Dorsolateral prefrontal cortex (tissue), 120 donors: ENCODE measurements at regions of chr19 and their contacts with region 1.

Region 1: DNA sequence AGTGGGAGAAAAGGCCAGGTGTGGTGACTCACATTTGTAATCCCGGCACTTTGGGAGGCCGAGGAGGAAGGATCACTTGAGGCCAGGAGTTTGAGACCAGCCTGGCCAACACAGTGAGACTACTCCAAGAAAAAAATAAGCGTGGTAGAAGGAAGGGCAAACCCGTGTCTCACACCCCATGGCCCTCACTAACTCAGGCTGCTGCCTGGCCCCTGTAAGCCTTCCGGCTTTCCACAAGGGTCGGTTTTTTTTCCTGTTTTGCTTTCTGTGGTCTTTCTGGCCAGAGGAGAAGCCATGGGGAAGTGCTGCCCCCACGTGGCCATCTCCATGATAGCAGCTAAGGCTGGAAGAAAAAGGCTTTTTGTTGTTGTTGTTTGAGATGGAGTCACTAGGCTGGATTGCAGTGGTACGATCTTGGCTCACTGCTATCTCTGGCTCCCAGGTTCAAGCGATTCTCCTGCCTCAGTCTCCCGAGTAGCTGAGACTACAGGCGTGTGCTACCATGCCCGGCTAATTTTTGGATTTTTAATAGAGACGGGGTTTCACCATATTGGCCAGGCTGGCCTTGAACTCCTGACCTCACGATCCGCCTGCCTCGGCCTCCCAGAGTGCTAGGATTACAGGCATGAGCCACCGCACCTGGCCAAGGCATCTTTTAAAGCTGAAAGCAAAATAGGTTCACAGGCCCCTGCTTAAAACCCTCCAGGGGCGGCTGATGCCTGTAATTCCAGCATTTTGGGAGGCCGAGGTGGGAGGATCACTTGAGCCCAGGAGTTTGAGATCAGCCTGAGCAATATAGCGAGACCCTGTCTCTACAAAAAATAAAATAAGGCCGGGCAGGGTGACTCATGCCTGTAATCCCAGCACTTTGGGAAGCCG is 7.5 kb upstream of the ARHGEF18 start:
- DNase-seq: peak; percentile 62 to 93 (median 84)
- H3K4me3 ChIP-seq: peak overlapping the region in 15 of 59 donors; percentile 1 to 34 (median 24)
- H3K27ac ChIP-seq: peak overlapping the region in 19 of 59 donors; percentile 9 to 64 (median 53)
- H3K27me3 ChIP-seq: no peaks in the 10 kb centered on the region
- CTCF ChIP-seq: peak; percentile 85 to 99 (median 95)

Region 2: GRCh38 chr19:7098701-7099596 is 242.2 kb before region 1 on chr19:
- intact Hi-C with region 1: loop called (anchors 2 kb)
- DNase-seq: peak; percentile 78 to 90 (median 86)
- H3K4me3 ChIP-seq: peak overlapping the region; percentile 51 to 93 (median 72)
- H3K27ac ChIP-seq: peak overlapping the region; percentile 82 to 99 (median 96)
- H3K27me3 ChIP-seq: no peaks in the 10 kb centered on the region
- CTCF ChIP-seq: peak in 15 of 56 donors; percentile 4 to 50 (median 20)

Region 3: DNA sequence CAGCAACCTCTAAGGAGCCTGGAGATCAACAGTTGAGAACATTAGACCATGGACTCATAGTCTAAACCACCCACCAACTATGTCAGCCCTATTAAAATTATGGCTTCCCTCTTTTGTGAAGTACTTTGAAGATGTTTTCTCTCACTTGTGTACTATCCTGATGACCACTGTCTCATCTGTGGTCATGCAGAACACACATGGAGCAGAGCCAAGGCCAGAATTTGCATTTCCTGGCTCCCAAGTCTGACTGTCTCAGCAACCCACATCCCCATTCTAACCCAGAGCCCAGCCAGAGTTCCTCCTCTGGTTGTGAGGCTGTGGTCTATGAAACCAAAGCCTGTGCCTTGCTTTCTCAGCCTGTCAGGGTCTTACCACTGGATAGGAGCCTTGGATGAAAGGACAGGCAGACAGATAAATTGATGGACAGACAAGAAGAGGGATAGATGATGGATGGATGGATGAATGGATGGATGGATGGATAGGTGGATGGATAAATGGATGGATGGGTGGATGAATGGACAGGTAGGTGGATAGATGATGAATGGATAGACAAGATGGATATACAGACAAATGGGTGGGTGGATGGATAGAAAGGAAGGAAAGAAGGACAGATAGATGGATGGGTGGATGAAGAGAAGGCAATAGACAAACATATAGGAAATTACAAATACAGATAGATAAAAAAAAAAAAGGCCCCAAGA is 236.3 kb before region 1 on chr19:
- intact Hi-C with region 1: loop called (anchors 2 kb)
- DNase-seq: peak in 1 of 10 donors; percentile 24
- H3K4me3 ChIP-seq: no peak overlapping the region
- H3K27ac ChIP-seq: no peak overlapping the region
- H3K27me3 ChIP-seq: no peaks in the 10 kb centered on the region
- CTCF ChIP-seq: no peak

Region 4: DNA sequence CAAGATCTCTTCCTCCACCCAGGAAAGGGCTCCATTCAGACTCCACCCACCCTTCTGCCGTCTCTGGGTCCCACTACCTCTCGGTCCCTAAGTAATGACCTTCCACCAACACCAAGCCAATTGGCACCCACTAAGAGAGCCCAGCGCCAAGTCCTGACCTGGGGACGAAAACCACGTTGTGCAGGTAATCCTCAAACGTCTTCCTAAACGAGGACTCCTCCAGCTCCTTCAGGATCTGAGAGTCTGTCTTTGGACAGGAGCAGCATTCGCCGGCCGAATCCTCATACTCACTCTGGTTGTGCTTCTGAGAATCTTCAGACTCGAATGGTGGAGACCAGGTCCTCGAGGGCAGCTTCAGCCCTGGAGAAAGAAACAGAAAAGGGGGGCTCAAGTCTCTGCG is 188.6 kb before region 1 on chr19:
- intact Hi-C with region 1: loop called (anchors 2 to 5 kb)
- DNase-seq: no peak
- H3K4me3 ChIP-seq: no peak overlapping the region
- H3K27ac ChIP-seq: no peak overlapping the region
- H3K27me3 ChIP-seq: no peaks in the 10 kb centered on the region
- CTCF ChIP-seq: no peak

Region 5: DNA sequence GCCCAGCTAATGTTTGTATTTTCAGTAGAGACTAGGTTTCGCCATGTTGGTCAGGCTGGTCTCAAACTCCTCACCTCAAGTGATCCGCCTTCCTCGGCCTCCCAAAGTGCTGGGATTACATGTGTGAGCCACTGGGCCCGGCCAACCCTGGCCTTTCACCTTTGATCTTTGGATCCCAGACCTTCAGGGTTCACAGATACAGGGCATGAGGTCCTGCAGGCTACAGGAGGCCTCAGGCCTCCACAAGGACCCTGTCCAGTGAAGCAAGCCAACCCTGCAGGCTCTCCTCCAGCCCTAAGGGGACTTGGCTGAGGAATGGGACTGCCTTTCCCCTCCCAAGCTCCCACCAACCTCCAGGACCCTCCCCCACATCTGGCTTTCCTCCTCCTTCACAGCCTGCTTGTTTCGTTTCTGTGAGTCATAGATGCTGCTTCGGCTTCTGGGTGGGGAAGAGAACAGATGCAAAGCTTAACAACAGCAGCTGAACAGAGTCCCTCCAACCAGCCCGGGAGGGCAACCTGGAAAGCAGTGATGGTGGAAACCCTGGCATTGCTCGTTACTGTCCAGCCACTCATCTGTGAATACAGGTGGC is 19.3 kb after region 1 on chr19:
- intact Hi-C with region 1: no loop called
- DNase-seq: no peak
- H3K4me3 ChIP-seq: no peak overlapping the region
- H3K27ac ChIP-seq: no peak overlapping the region
- H3K27me3 ChIP-seq: no peaks in the 10 kb centered on the region
- CTCF ChIP-seq: no peak

Region 6: DNA sequence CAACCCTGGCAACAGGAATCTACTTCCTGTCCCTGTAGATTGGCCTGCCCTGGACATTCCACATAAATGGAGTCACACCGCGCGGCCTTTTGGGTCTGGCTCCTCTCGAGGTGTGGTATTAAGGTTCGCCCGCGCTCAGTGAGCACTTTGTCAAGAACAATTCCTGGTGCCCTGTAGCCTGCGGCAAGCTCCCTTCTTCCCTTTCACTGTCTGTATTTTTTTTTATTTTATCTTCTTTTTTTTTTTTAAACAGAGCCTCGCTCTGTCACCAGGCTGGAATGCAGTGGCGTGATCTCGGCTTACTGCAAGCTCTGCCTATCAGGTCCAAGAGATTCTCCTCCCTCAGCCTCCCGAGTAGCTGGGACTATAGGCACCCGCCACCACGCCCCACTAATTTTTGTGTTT is 119.4 kb after region 1 on chr19:
- intact Hi-C with region 1: no loop called
- DNase-seq: no peak
- H3K4me3 ChIP-seq: no peak overlapping the region
- H3K27ac ChIP-seq: no peak overlapping the region
- H3K27me3 ChIP-seq: no peaks in the 10 kb centered on the region
- CTCF ChIP-seq: no peak

Region 7: GRCh38 chr19:7629347-7630054 is 288.3 kb after region 1 on chr19 and contains the starts of genes PET100 and XAB2:
- intact Hi-C with region 1: no loop called
- DNase-seq: peak; percentile 95 to 99 (median 98)
- H3K4me3 ChIP-seq: peak within 1 kb of the TSS; percentile 71 to 100 (median 92)
- H3K27ac ChIP-seq: peak within 1 kb of the TSS in 49 of 59 donors; percentile 15 to 90 (median 72)
- H3K27me3 ChIP-seq: no peaks in the 10 kb centered on the region
- CTCF ChIP-seq: peak in 17 of 56 donors; percentile 8 to 56 (median 25)
- total RNA-seq, gene PET100: 33.4 to 159 (median 92.2) TPM
- total RNA-seq, gene XAB2: 30.8 to 56.2 (median 38.7) TPM